ENCODE measurements at regions of chr6 and their contacts with region 1.

Region 1: GRCh38 chr6:11392778-11393507 is 144.6 kb upstream of the TMEM170B start:
- DNase-seq: no peak
- ATAC-seq: no peak
- H3K4me3 ChIP-seq: no peak overlapping the region
- H3K27ac ChIP-seq: no peak overlapping the region
- H3K4me1 ChIP-seq: peaks cover 8% of the 10 kb centered on the region
- H3K27me3 ChIP-seq: peaks cover 2% of the 10 kb centered on the region
- CTCF ChIP-seq: no peak
- POLR2A ChIP-seq: no peak
- RAD21 ChIP-seq: no peak

Region 2: DNA sequence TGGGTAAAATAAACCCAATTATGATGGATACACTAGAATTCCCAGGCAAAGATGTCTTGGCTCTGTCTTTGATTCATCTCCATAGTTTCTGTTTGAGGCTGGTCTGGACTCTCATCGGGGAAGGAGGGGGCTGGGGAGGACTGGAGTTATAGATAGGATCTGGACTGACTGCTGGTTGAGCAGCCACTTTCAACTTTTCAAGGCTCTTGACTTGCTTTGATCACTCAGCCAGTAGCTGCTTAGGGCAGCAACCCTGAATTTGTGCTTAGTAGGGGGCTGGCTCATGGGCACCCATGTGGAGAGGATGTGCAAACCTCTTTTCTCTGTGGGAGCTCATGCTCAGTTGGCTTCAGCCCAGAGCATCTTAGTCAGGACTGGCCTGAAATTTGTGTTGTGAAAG is 46.4 kb before region 1 on chr6:
- CTCF ChIA-PET with region 1: no interaction called
- POLR2A ChIA-PET with region 1: no interaction called
- dilution Hi-C with region 1: no loop called
- in situ Hi-C with region 1: no loop called
- intact Hi-C with region 1: no loop called
- DNase-seq: no peak
- ATAC-seq: no peak
- H3K4me3 ChIP-seq: no peak overlapping the region
- H3K27ac ChIP-seq: no peak overlapping the region
- H3K4me1 ChIP-seq: 0 out of 2 replicates have a peak, but pooled peaks cover 1% of the 10 kb centered on the region
- H3K27me3 ChIP-seq: peaks cover 4% of the 10 kb centered on the region; the same call in 1 of the 2 replicates
- CTCF ChIP-seq: no peak
- POLR2A ChIP-seq: no peak
- RAD21 ChIP-seq: no peak

Region 3: GRCh38 chr6:11356404-11357155 is 36.4 kb before region 1 on chr6:
- CTCF ChIA-PET with region 1: no interaction called
- POLR2A ChIA-PET with region 1: no interaction called
- dilution Hi-C with region 1: no loop called
- in situ Hi-C with region 1: no loop called
- intact Hi-C with region 1: loop called (anchors 5 kb)
- DNase-seq: no peak
- ATAC-seq: no peak
- H3K4me3 ChIP-seq: no peak overlapping the region
- H3K27ac ChIP-seq: no peak overlapping the region
- H3K4me1 ChIP-seq: peaks cover 5% of the 10 kb centered on the region; the same call in 1 of the 2 replicates
- H3K27me3 ChIP-seq: no peaks in the 10 kb centered on the region
- CTCF ChIP-seq: no peak
- POLR2A ChIP-seq: no peak
- RAD21 ChIP-seq: no peak

Region 4: GRCh38 chr6:12222405-12223366 is 829.7 kb after region 1 on chr6:
- CTCF ChIA-PET with region 1: no interaction called
- POLR2A ChIA-PET with region 1: no interaction called
- dilution Hi-C with region 1: no loop called
- in situ Hi-C with region 1: no loop called
- intact Hi-C with region 1: no loop called
- DNase-seq: no peak
- ATAC-seq: no peak
- H3K4me3 ChIP-seq: no peak overlapping the region
- H3K27ac ChIP-seq: no peak overlapping the region
- H3K4me1 ChIP-seq: no peaks in the 10 kb centered on the region
- H3K27me3 ChIP-seq: no peaks in the 10 kb centered on the region
- CTCF ChIP-seq: no peak
- POLR2A ChIP-seq: no peak
- RAD21 ChIP-seq: no peak